Activated T-helper 2 cell treated with anti-CD3 and anti-CD28 coated beads, Interferon-gamma antibody, Interleukin-2, Interleukin-4, amounts not matched to agents 10 μg/mL and 5 μg/mL and 100 μg/mL, durations not matched to agents 14 hours and 24 hours and 36 hours (primary cell): ENCODE measurements at regions of chr2 and their contacts with region 1.

Region 1: DNA sequence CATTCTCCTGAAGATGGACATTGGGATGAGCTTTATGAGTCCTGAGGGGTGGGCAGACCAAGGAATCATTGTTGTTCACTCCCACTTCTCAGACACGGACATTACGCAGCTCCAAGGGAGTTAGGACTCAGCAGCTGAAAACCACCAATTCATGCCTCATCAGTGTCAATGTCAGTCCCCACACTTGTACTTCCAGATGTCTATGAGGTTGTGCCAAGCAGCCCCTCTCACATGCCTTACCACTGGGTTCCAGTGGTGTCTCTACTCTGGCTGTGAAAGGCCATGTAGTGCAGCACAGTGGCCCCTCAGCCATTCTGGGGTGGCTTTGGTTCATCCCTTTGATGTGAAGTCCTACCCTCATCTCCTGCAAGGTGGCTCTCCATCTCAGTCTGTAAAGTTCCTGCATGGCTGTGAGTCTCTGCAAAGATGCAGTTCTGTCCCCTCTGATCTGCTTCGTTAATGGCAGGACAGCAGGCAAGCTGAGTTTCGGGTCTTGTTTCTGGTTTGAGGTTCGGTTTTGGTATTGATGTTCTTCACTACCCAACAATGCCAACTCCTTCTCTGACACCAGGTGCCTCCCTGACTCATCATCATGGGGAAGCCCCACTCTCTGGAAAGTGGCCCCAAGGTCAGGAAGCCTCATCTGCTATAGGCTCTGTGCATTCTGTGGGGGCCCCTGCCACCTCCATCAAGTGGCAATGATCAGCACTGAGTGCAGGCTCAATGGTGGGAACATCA is 14.0 kb upstream of the COL6A3 start:
- DNase-seq: peak; percentile 31
- H3K4me3 Mint-ChIP-seq: peak overlapping the region; percentile 55
- H3K27ac Mint-ChIP-seq: peak overlapping the region; percentile 84
- H3K4me1 Mint-ChIP-seq: peaks cover 69% of the 10 kb centered on the region
- H3K27me3 Mint-ChIP-seq: peaks cover 3% of the 10 kb centered on the region

Region 2: DNA sequence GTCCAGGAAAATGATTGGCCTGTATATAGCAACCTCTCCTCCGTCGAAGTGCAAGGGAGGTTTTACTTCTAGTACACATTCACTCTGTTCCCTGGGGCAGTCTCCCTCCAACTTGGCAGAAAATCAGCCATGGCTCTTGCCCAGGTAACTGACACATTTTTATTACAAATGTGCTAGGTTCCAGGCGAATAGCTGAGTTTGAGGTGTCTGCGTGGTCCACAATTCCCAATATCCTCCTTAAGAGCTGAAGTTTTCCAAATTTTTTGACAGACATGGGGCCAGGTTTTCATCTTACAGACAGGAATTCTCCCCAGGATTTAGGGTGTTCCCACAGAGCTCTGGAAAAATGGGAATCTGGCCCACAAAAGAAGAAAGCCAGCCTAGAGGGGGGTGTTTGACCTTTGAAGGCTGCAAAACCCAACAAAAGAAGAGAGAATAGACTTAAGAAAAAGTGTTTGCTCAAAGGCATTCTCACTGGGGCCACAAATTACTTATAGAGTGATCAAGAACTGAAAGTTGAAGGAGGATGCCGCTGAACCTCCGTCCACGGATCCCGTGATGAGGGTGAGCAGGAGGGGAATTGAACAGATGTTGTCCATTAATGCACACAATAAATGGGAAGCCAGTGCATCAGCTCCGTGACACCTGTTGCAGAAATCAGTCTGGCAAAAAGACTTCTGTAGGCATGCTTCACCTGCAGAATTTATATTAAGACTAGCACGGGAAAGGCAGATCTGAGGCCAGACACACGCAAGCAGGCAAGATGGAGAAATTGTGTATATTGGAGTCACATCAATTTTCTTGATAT is 584.6 kb before region 1 on chr2:
- intact Hi-C with region 1: no loop called
- DNase-seq: no peak
- H3K4me3 Mint-ChIP-seq: no peak overlapping the region
- H3K27ac Mint-ChIP-seq: no peak overlapping the region
- H3K4me1 Mint-ChIP-seq: no peaks in the 10 kb centered on the region
- H3K27me3 Mint-ChIP-seq: no peaks in the 10 kb centered on the region

Region 3: GRCh38 chr2:237227592-237228280 is 200.2 kb before region 1 on chr2:
- intact Hi-C with region 1: loop called (anchors 2 kb)
- DNase-seq: no peak
- H3K4me3 Mint-ChIP-seq: no peak overlapping the region
- H3K27ac Mint-ChIP-seq: peak overlapping the region; percentile 33
- H3K4me1 Mint-ChIP-seq: peaks cover 19% of the 10 kb centered on the region
- H3K27me3 Mint-ChIP-seq: peaks cover 16% of the 10 kb centered on the region

Region 4: GRCh38 chr2:237254911-237255578 is 172.9 kb before region 1 on chr2:
- intact Hi-C with region 1: no loop called
- DNase-seq: no peak
- H3K4me3 Mint-ChIP-seq: no peak overlapping the region
- H3K27ac Mint-ChIP-seq: no peak overlapping the region
- H3K4me1 Mint-ChIP-seq: peaks cover 4% of the 10 kb centered on the region
- H3K27me3 Mint-ChIP-seq: peaks cover 14% of the 10 kb centered on the region